ENCODE measurements at regions of chr10 and their contacts with region 1.

Region 1: GRCh38 chr10:130110246-130111112 is at the start of gene C10orf143:
- DNase-seq: peak; percentile 97
- ATAC-seq: peak; percentile 85
- H3K4me3 Mint-ChIP-seq: peak within 1 kb of the TSS; percentile 98
- H3K27ac Mint-ChIP-seq: peak within 1 kb of the TSS; percentile 97
- H3K4me1 Mint-ChIP-seq: peaks cover 50% of the 10 kb centered on the region
- H3K27me3 Mint-ChIP-seq: no peaks in the 10 kb centered on the region
- total RNA-seq, gene C10orf143: 2.7 to 4.3 TPM

Region 2: DNA sequence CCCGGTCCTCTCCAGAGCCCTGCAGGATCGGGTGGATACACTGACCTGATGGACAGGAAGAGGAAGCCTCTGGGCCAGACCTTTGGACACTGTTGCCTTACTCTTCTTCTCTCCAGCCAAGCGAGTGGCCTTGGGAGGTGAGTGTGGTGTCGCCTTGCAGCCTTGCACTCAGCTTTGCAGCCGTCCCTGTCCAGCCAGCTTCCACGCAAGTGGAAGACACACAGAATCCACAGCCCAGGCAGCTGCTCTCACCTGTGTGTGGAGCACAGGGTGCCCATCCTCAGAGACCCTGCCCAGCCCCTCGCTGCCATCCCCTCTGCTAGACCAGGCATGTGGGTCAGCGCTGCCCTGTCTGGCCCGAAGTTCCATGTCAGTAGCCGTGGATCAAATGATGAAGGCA is 385.5 kb before region 1 on chr10:
- CTCF ChIA-PET with region 1: no interaction called
- DNase-seq: no peak
- ATAC-seq: no peak
- H3K4me3 Mint-ChIP-seq: no peak overlapping the region
- H3K27ac Mint-ChIP-seq: no peak overlapping the region
- H3K4me1 Mint-ChIP-seq: no peaks in the 10 kb centered on the region
- H3K27me3 Mint-ChIP-seq: no peaks in the 10 kb centered on the region

Region 3: GRCh38 chr10:129971381-129972144 is 138.9 kb before region 1 on chr10:
- CTCF ChIA-PET with region 1: interaction called, 11 read pairs
- DNase-seq: no peak
- ATAC-seq: no peak
- H3K4me3 Mint-ChIP-seq: peak overlapping the region; percentile 28
- H3K27ac Mint-ChIP-seq: peak overlapping the region; percentile 77
- H3K4me1 Mint-ChIP-seq: peaks cover 6% of the 10 kb centered on the region
- H3K27me3 Mint-ChIP-seq: peaks cover 76% of the 10 kb centered on the region

Region 4: GRCh38 chr10:130099344-130099743 is 11.1 kb before region 1 on chr10:
- CTCF ChIA-PET with region 1: interaction called, 10 read pairs
- DNase-seq: no peak
- ATAC-seq: no peak
- H3K4me3 Mint-ChIP-seq: no peak overlapping the region
- H3K27ac Mint-ChIP-seq: no peak overlapping the region
- H3K4me1 Mint-ChIP-seq: no peaks in the 10 kb centered on the region
- H3K27me3 Mint-ChIP-seq: no peaks in the 10 kb centered on the region

Region 5: DNA sequence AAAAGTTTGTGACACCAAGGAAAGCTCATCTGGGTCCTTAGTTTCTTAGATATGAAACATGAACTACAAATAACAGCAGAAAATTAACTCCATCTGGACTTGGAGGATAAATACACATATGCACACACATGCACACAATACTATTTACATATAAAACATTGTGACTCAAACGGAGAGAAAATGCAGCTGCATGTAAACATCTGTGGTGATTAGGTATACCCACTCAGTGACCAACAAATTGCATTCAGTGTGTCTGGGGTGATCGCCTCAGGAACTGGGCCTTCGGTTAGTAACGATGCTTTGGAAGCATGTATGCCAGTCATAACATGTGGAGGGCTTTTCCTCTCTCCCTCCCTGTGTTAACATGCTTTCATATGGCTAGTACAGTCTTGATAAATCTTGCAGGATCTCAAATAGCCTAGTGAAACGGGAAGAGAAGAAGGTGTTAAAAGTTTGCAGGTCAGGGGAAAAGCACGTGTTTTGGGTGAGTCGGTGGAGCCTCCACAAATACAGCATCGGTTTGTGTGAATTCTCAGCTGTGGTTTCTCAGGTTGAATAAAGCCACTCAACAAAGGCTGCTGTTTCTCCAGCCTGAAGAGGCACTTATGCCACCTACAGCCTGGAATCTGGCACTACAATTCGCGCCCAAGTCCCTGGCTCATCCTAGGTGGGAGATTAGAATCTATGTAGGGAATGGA is 17.0 kb after region 1 on chr10:
- CTCF ChIA-PET with region 1: interaction called, 23 read pairs
- DNase-seq: peak; percentile 67
- ATAC-seq: peak; percentile 82
- H3K4me3 Mint-ChIP-seq: no peak overlapping the region
- H3K27ac Mint-ChIP-seq: no peak overlapping the region
- H3K4me1 Mint-ChIP-seq: peaks cover 10% of the 10 kb centered on the region
- H3K27me3 Mint-ChIP-seq: peaks cover 41% of the 10 kb centered on the region

Region 6: DNA sequence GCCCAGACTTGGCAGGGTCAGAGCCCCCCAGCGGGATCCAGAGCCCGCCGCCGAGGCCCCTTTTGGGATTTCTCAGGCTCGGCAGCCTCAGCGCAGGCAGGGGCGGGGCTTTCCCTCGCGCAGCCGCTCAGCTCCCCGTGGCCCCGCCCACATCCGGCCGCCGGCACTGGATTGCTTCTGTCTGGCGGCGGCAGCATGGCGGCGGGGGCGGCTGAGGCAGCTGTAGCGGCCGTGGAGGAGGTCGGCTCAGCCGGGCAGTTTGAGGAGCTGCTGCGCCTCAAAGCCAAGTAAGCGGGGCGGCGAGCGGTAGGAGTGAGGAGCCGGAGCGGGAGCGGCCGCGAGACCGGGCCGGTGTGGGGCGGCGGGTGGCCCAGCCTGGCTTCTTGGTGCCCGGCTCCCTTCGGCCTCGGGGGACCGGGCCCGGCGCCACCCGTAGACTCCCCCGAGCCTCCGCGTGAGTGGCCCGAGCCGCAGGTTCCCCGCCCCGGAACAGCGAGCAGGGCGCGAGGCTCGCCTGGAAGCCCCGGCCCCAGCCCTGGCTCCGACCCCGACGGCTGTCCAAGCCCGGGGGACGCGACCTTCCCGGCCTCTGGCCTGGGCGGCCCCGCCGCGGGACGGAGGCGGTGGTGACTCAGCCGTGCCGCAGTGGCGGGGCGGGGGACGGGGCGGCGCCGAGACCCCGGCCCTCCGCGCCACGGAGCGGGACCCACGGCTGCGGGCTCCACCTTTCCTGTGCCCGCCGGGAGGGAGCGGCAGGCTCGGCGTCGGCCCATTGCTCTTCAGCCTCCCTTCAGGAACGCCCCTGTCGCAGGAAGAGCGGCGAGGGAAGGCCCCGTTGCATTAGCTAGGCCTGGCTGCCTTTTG is 26.0 kb after region 1 on chr10 and contains the start of gene GLRX3:
- CTCF ChIA-PET with region 1: interaction called, 48 read pairs
- DNase-seq: peak; percentile 90
- ATAC-seq: peak; percentile 89
- H3K4me3 Mint-ChIP-seq: peak within 1 kb of the TSS; percentile 80
- H3K27ac Mint-ChIP-seq: peak within 1 kb of the TSS; percentile 82
- H3K4me1 Mint-ChIP-seq: peaks cover 42% of the 10 kb centered on the region
- H3K27me3 Mint-ChIP-seq: peaks cover 15% of the 10 kb centered on the region
- total RNA-seq, gene GLRX3: 65.0 to 89.7 TPM